HEK293T (cell line): ENCODE measurements at regions of chr1 and their contacts with region 1.

Region 1: GRCh38 chr1:211698161-211699026 is 23.0 kb upstream of the NEK2 start:
- DNase-seq: peak; percentile 92

Region 2: GRCh38 chr1:211675230-211676105 is 22.9 kb before region 1 on chr1 and contains the start of gene NEK2:
- CTCF ChIA-PET with region 1: interaction called, 17 read pairs
- POLR2A ChIA-PET with region 1: interaction called, 3 read pairs
- DNase-seq: peak; percentile 94

Region 3: DNA sequence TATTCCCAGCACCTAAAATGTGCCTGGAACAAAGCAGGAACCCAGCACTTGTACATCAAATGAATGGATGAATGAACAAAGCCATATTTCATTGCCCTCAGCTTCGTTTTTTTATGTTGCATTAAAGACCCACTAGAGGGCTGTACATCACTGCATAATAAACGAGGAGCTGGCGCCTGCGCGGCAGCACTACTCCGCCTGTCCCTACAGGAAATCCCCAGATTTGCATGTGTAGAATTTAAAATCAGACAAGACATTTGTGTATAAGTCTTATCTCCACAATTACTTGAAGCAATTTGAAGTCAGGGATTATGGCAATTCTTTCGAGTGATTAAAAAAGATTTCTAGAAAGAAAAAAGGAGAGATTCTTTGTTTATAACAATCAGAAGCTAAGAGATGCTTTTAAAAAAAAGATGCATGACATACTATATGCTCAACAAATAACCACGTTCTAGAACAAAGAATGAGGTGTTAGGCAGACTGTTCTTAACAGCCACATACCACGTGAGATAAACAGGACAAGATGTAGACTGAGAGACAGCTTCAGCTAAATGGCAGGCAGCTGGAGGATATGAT is 17.6 kb before region 1 on chr1:
- CTCF ChIA-PET with region 1: interaction called, 17 read pairs
- POLR2A ChIA-PET with region 1: interaction called, 3 read pairs
- DNase-seq: peak; percentile 86

Region 4: GRCh38 chr1:211761400-211761799 is 63.0 kb after region 1 on chr1:
- CTCF ChIA-PET with region 1: no interaction called
- POLR2A ChIA-PET with region 1: no interaction called
- DNase-seq: no peak